ENCODE measurements at regions of chr11 and their contacts with region 1.

Region 1: GRCh38 chr11:120108154-120108865 is 29.6 kb downstream of the TRIM29 start:
- DNase-seq: peak; percentile 46 to 94
- H3K4me3 ChIP-seq: no peak overlapping the region
- H3K27ac ChIP-seq: no peak overlapping the region
- H3K4me1 ChIP-seq: peaks cover 2 to 12% (median 7%) of the 10 kb centered on the region in 4 experiments
- H3K27me3 ChIP-seq: peaks cover 0 to 2% (median 1%) of the 10 kb centered on the region in 4 experiments; a peak in 2 of 7 replicates
- CTCF ChIP-seq: peak; percentile 98 to 99 (median 98)
- EP300 ChIP-seq: no peak
- POLR2A ChIP-seq: no peak
- RAD21 ChIP-seq: peak; percentile 100

Region 2: GRCh38 chr11:119666463-119667131 is 441.7 kb before region 1 on chr11:
- CTCF ChIA-PET with region 1: interaction called, 12 read pairs
- POLR2A ChIA-PET with region 1: no interaction called
- DNase-seq: peak; percentile 69 to 92
- H3K4me3 ChIP-seq: no peak overlapping the region
- H3K27ac ChIP-seq: no peak overlapping the region
- H3K4me1 ChIP-seq: peaks cover 2 to 19% (median 15%) of the 10 kb centered on the region in 4 experiments; a peak in 6 of 7 replicates
- H3K27me3 ChIP-seq: no peaks in the 10 kb centered on the region
- CTCF ChIP-seq: peak; percentile 92 to 99 (median 96)
- EP300 ChIP-seq: no peak
- POLR2A ChIP-seq: no peak
- RAD21 ChIP-seq: peak; percentile 99

Region 3: DNA sequence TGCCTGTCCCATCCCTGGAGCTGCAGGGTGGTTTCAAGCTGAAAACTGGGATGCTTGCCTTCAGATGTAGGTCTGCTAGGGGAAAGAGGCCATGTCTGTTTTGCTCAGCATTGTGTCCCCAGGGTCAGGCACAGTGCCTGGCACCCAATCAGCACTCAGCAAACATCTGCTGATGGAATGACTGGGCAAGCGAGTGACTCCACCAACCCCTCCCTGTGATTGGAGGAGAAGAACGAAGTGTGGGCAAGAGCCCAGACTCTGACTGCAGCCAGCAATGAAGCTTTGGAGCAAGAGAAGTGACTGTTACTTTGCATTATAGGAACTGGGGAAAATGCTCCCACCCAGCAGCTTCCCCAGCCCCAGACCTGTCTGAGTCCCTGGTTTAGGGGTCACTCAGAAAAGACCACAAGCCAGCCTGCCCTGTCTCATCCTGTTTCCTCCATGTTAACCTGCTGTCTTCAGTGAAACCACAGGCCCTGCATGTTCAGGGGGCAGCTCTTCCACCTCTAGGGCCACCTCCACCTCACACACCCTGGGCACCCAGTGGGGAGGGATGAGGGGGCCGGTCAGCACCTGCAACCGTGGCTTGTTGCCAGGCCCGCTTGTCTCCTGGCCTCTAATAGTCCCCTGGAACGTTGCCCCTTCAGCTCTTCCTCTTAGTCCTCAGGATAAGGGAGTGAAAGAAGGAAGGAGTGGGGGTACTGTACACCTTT is 117.8 kb before region 1 on chr11:
- CTCF ChIA-PET with region 1: interaction called, 12 read pairs
- POLR2A ChIA-PET with region 1: no interaction called
- DNase-seq: no peak
- H3K4me3 ChIP-seq: no peak overlapping the region
- H3K27ac ChIP-seq: no peak overlapping the region
- H3K4me1 ChIP-seq: peaks cover 0 to 9% (median 3%) of the 10 kb centered on the region in 4 experiments; a peak in 1 of 7 replicates
- H3K27me3 ChIP-seq: no peaks in the 10 kb centered on the region
- CTCF ChIP-seq: no peak
- EP300 ChIP-seq: no peak
- POLR2A ChIP-seq: no peak
- RAD21 ChIP-seq: no peak

Region 4: DNA sequence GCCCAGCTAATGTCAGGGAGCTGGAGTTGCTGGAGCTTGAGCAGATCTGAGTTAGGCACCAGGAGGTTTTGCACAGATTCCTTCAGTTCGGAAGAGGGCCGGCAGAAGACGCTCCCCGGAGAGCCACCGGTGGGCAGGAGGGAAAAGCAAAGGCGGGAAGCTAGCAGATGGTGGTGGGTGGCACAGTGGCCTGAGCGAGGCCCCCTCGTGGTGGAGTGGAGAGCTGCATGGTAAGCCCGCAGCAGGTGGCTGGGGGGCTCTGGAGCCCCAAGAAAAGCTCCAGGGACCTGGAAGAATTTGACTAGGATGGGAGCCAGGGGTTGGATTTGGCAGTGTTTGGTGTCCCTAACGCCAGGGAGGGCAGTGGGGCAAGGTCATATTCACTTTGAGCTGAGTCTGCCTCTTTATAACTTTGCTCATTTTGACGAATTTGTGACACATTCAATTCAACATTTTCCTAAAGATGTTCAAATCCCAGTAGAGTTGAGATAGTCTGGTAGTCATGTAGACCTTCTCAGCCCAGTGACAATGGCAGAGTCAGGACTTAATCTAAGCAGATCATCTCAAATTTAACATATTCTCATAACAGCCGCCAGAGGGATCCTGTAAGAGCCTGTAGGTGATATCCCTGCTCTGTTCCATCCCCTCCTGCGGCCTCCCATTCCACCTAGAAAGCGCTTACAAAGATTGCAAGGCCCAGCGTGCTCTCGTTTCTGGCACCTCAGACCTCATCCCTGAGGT is 28.4 kb before region 1 on chr11:
- CTCF ChIA-PET with region 1: interaction called, 44 read pairs
- POLR2A ChIA-PET with region 1: no interaction called
- DNase-seq: peak in 1 of 2 experiments; percentile 82
- H3K4me3 ChIP-seq: no peak overlapping the region
- H3K27ac ChIP-seq: no peak overlapping the region
- H3K4me1 ChIP-seq: no peaks in the 10 kb centered on the region
- H3K27me3 ChIP-seq: no peaks in the 10 kb centered on the region; a peak in 2 of 7 replicates
- CTCF ChIP-seq: peak; percentile 74 to 82 (median 76)
- EP300 ChIP-seq: no peak
- POLR2A ChIP-seq: no peak
- RAD21 ChIP-seq: peak; percentile 55 to 72

Region 5: DNA sequence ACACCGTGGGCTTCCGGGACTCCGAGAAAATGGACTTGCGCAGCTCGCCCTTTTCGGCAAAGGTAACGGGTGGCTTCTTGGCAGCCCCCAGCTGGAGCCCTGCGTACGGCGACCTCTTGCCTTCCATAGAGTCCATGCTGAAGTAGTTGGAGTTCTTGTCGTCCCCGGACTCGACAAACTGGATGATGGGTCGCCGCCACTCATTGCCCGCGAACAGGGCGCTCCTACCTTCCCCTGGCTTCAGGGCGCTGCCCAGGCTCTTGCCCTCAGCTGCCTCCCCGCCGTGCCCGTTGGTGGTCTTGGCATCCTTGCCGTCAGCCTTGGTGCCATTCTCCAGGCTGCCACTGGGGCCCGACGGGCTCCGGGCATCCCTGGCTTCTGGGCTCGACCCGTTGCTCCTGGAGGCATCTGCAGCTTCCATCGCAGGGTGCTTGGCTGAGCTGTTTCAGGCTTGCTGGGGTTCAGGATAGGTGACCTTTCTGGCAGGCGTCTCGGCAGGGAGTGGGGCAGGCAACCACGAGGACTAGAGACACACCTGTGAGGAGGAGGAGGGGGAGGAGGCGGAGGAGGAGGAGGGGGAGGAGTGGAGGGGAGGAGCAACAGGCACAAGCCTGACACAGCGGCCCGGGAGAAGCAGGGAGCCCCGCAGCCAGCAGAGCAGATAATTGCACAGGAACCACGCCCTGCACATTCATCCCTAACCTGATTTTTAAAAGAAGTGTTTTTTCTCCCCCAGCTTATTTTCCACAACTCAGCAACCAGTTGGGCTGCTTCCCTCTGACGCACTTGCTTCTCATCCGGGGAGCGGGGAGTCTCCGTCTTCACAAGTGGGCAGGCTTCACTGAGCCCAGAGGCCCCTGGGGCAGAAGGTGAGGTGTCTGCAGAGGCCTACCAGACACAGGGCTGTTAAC is 29.6 kb after region 1 on chr11 and contains the start of gene TRIM29:
- CTCF ChIA-PET with region 1: interaction called, 15 read pairs
- POLR2A ChIA-PET with region 1: no interaction called
- DNase-seq: peak in 1 of 2 experiments; percentile 59
- H3K4me3 ChIP-seq: no peak within 1 kb of the TSS
- H3K27ac ChIP-seq: no peak within 1 kb of the TSS
- H3K4me1 ChIP-seq: peaks cover 0 to 4% (median 1%) of the 10 kb centered on the region in 4 experiments; a peak in 1 of 7 replicates
- H3K27me3 ChIP-seq: peaks cover 0 to 2% (median 0%) of the 10 kb centered on the region in 4 experiments; a peak in 2 of 7 replicates
- CTCF ChIP-seq: peak; percentile 3 to 41 (median 22); a peak in 2 of 4 replicates
- EP300 ChIP-seq: no peak
- POLR2A ChIP-seq: no peak
- RAD21 ChIP-seq: no peak; a peak in 1 of 4 replicates
- total RNA-seq, gene TRIM29: 0.43 TPM in 1 of 2 replicates, not detected in the other

Region 6: GRCh38 chr11:120197251-120197891 is 89.1 kb after region 1 on chr11:
- CTCF ChIA-PET with region 1: no interaction called
- POLR2A ChIA-PET with region 1: no interaction called
- DNase-seq: no peak
- H3K4me3 ChIP-seq: peak overlapping the region in 1 of 4 experiments; percentile 29; a peak in 1 of 8 replicates
- H3K27ac ChIP-seq: no peak overlapping the region
- H3K4me1 ChIP-seq: peaks cover 4 to 28% (median 20%) of the 10 kb centered on the region in 4 experiments
- H3K27me3 ChIP-seq: peaks cover 3 to 41% (median 38%) of the 10 kb centered on the region in 4 experiments
- CTCF ChIP-seq: 0 out of 4 replicates have a peak, but pooled peaks of 1 of the 3 experiments have one; percentile 0
- EP300 ChIP-seq: no peak
- POLR2A ChIP-seq: no peak
- RAD21 ChIP-seq: no peak